ENCODE measurements at regions of chr9 and their contacts with region 1.

Region 1: GRCh38 chr9:104921067-104921741 is 6.8 kb downstream of the ABCA1 start:
- DNase-seq: no peak
- H3K4me3 ChIP-seq: no peak overlapping the region
- H3K27me3 ChIP-seq: no peaks in the 10 kb centered on the region
- CTCF ChIP-seq: no peak

Region 2: DNA sequence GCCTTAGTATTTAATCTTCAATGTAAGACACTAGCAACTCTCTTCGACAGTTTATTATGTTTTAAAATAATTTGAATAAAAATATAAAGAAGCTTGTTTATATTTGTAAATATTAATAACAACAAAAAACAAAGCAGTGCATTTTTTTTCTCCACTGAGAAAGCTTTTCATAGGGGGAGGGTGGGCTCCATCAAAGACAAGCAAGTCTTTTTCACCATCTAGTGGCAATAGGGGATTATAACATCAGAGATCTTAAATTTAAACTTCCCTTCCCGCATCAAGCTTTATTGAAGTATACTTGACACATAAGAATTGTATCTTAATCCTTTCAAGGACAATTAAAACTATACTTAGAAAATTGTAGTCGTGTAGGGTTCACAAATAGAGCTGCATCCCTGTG is 426.4 kb before region 1 on chr9:
- CTCF ChIA-PET with region 1: no interaction called
- POLR2A ChIA-PET with region 1: no interaction called
- DNase-seq: no peak
- H3K4me3 ChIP-seq: no peak overlapping the region
- H3K27me3 ChIP-seq: no peaks in the 10 kb centered on the region
- CTCF ChIP-seq: no peak

Region 3: GRCh38 chr9:104711604-104712003 is 209.6 kb before region 1 on chr9:
- CTCF ChIA-PET with region 1: no interaction called
- POLR2A ChIA-PET with region 1: no interaction called
- DNase-seq: no peak
- H3K4me3 ChIP-seq: no peak overlapping the region
- H3K27me3 ChIP-seq: no peaks in the 10 kb centered on the region; the same call in 1 of the 2 replicates
- CTCF ChIP-seq: no peak

Region 4: DNA sequence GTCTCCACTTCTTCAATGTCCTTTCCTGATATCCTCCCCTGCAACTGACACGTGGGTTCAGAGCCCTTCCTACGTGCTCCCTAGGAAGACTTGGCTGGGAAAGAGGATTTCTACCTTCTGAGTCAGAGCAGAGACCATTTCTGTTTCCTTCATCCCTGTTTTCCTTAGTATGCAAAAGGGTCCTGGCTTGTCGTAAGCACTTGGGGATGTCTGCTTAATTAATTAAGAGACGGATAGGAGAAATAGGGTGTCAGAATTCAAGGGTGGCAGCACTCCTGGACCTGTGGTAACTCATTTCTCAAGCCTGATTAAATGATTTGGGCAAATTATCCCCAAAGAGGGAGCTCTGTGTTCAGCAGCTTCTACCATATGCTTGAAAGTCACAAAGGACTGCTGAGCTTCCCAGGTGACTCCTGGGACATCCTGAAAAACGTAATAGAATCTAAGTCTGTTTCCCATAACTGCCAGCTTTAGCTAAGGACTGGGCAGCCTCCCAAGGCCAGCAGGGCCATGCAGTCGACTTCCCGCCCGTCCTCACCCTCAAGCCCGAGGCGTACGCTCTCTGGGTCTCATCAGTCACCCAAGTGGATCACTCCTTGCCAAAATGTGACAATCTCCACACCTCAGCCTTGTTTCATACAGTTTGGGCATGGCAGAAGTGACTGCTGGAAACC is 13.8 kb before region 1 on chr9:
- CTCF ChIA-PET with region 1: interaction called, 13 read pairs
- POLR2A ChIA-PET with region 1: no interaction called
- DNase-seq: no peak
- H3K4me3 ChIP-seq: no peak overlapping the region
- H3K27me3 ChIP-seq: no peaks in the 10 kb centered on the region
- CTCF ChIP-seq: no peak

Region 5: GRCh38 chr9:104934691-104935500 is 13.7 kb after region 1 on chr9:
- CTCF ChIA-PET with region 1: no interaction called
- POLR2A ChIA-PET with region 1: no interaction called
- DNase-seq: no peak
- H3K4me3 ChIP-seq: no peak overlapping the region
- H3K27me3 ChIP-seq: no peaks in the 10 kb centered on the region
- CTCF ChIP-seq: no peak

Region 6: DNA sequence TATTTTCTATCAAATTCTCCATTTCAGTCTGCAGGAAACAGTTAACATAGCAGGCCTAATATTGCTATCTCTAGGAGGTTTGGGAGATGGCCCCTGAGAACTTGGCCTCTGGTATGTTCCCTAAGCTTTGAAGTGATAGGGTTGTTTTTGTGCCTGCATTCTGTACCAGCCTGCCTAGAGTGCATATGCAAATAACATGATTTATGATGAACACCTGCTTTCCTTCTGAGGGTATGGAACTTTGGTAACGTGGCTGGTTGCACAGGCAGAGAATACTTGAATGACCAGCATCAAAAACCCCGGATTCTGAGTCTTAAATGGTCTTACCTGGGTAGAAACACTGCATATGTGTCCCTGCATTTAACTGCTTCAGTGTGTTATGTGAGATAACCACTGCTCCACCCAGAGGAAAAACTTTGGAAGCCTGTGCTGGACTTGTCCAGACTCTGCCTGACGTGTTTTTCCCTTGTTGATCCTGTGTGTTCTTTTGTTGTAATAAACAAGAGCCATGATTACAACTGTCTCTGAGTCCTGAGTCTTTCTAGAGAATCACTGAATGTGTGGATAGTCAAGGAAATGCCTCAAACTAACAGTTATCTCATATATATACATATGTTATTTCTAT is 118.1 kb after region 1 on chr9:
- CTCF ChIA-PET with region 1: no interaction called
- POLR2A ChIA-PET with region 1: no interaction called
- DNase-seq: no peak
- H3K4me3 ChIP-seq: no peak overlapping the region
- H3K27me3 ChIP-seq: no peaks in the 10 kb centered on the region
- CTCF ChIP-seq: no peak